Activated CD4-positive, alpha-beta T cell treated with anti-CD3 and anti-CD28 coated beads for 36 hours (primary cell): ENCODE measurements at regions of chr3 and their contacts with region 1.

Region 1: GRCh38 chr3:4850928-4851265 is 128.3 kb upstream of the BHLHE40 start:
- DNase-seq: peak; percentile 56
- ATAC-seq: peak; percentile 72
- H3K4me3 Mint-ChIP-seq: peak overlapping the region; percentile 39
- H3K27ac Mint-ChIP-seq: peak overlapping the region; percentile 98
- H3K4me1 Mint-ChIP-seq: peaks cover 84% of the 10 kb centered on the region
- H3K27me3 Mint-ChIP-seq: no peaks in the 10 kb centered on the region

Region 2: DNA sequence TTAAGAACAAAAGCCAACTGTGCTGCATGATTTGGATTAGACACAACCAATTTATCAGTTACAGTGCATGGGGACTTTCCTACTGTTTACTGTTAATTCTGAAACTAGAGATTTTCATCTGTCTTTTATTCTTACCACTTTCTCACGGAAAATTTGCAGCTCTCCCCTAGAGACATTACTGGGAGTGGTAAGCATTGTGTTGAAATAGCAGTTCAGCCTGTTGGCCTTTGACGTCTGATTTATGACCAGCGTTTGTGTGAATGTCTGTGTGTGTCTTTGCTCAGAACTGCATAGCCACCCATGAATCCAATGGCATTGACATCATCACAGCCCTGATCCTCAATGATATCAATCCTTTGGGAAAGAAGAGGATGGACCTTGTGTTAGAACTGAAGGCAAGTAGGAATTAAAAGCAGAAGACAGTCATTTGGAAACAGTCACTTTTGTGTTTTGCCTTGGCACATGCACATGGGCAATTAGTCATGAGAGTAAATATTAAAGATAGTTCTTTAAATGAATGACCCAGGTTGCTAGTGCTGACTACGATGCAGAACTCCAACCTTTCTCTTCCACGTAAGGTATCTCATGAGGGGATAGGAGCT is 73.8 kb before region 1 on chr3:
- CTCF ChIA-PET with region 1: interaction called, 3 read pairs
- POLR2A ChIA-PET with region 1: no interaction called
- intact Hi-C with region 1: loop called (anchors 1 kb)
- DNase-seq: peak; percentile 38
- ATAC-seq: peak; percentile 86
- H3K4me3 Mint-ChIP-seq: no peak overlapping the region
- H3K27ac Mint-ChIP-seq: peak overlapping the region; percentile 91
- H3K4me1 Mint-ChIP-seq: peaks cover 40% of the 10 kb centered on the region
- H3K27me3 Mint-ChIP-seq: no peaks in the 10 kb centered on the region

Region 3: GRCh38 chr3:4797201-4797705 is 53.6 kb before region 1 on chr3:
- CTCF ChIA-PET with region 1: no interaction called
- POLR2A ChIA-PET with region 1: no interaction called
- intact Hi-C with region 1: no loop called
- DNase-seq: no peak
- ATAC-seq: no peak
- H3K4me3 Mint-ChIP-seq: no peak overlapping the region
- H3K27ac Mint-ChIP-seq: no peak overlapping the region
- H3K4me1 Mint-ChIP-seq: no peaks in the 10 kb centered on the region
- H3K27me3 Mint-ChIP-seq: no peaks in the 10 kb centered on the region

Region 4: DNA sequence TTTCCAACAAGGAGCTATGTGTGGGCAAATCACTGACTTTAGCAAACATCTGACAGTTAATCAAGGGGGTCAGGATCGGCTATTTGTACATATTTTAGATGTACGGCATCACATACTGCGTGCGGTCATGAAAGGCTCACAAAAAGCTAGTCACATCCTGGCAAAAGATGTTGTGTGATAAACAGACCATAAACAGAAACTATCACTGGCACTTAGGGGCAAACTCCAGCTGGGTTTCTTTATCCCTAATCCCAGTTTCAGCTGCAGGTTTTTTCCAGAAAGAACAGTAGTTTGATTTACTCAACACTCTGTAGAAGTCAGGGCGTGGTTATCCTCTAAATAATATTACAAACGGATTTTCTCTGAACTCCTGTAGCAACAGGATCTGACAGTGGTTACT is 15.9 kb after region 1 on chr3:
- CTCF ChIA-PET with region 1: interaction called, 4 read pairs
- POLR2A ChIA-PET with region 1: no interaction called
- intact Hi-C with region 1: loop called in 1 of 2 experiments (anchors 1 kb)
- DNase-seq: no peak
- ATAC-seq: no peak
- H3K4me3 Mint-ChIP-seq: peak overlapping the region; percentile 80
- H3K27ac Mint-ChIP-seq: peak overlapping the region; percentile 92
- H3K4me1 Mint-ChIP-seq: peaks cover 40% of the 10 kb centered on the region
- H3K27me3 Mint-ChIP-seq: no peaks in the 10 kb centered on the region

Region 5: GRCh38 chr3:4898454-4899313 is 47.8 kb after region 1 on chr3:
- CTCF ChIA-PET with region 1: no interaction called
- POLR2A ChIA-PET with region 1: no interaction called
- intact Hi-C with region 1: loop called in 1 of 2 experiments (anchors 2 kb)
- DNase-seq: no peak
- ATAC-seq: peak; percentile 80
- H3K4me3 Mint-ChIP-seq: peak overlapping the region; percentile 15
- H3K27ac Mint-ChIP-seq: peak overlapping the region; percentile 34
- H3K4me1 Mint-ChIP-seq: peaks cover 47% of the 10 kb centered on the region
- H3K27me3 Mint-ChIP-seq: no peaks in the 10 kb centered on the region

Region 6: GRCh38 chr3:4935347-4935746 is 84.5 kb after region 1 on chr3:
- CTCF ChIA-PET with region 1: no interaction called
- POLR2A ChIA-PET with region 1: no interaction called
- intact Hi-C with region 1: no loop called
- DNase-seq: peak; percentile 49
- ATAC-seq: peak; percentile 81
- H3K4me3 Mint-ChIP-seq: no peak overlapping the region
- H3K27ac Mint-ChIP-seq: peak overlapping the region; percentile 44
- H3K4me1 Mint-ChIP-seq: peaks cover 15% of the 10 kb centered on the region
- H3K27me3 Mint-ChIP-seq: no peaks in the 10 kb centered on the region

Region 7: GRCh38 chr3:5122030-5122740 is 271.3 kb after region 1 on chr3 and contains the start of gene ARL8B:
- CTCF ChIA-PET with region 1: no interaction called
- POLR2A ChIA-PET with region 1: interaction called, 3 read pairs
- intact Hi-C with region 1: loop called (anchors 5 kb)
- DNase-seq: peak; percentile 96
- ATAC-seq: peak; percentile 84
- H3K4me3 Mint-ChIP-seq: peak within 1 kb of the TSS; percentile 83
- H3K27ac Mint-ChIP-seq: peak within 1 kb of the TSS; percentile 94
- H3K4me1 Mint-ChIP-seq: peaks cover 42% of the 10 kb centered on the region
- H3K27me3 Mint-ChIP-seq: no peaks in the 10 kb centered on the region
- total RNA-seq, gene ARL8B: 44.7 to 45.1 TPM

Region 8: DNA sequence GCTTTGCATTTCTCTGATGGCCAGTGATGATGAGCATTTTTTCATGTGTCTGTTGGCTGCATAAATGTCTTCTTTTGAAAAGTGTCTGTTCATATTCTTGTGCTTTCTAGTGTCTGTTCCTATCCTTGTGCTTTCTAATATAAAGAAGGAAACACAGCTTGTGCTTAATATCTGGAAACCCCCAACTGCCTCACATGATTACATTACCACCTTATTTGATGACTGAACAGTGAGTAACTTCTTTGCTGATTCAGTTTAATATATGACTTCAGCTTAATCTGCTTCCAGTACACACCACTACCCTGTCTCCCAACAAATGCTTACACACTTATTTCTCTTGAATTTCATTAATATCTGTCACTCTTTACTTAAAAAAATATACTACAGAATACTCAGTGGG is 1171.7 kb after region 1 on chr3:
- CTCF ChIA-PET with region 1: no interaction called
- POLR2A ChIA-PET with region 1: no interaction called
- intact Hi-C with region 1: no loop called
- DNase-seq: no peak
- ATAC-seq: no peak
- H3K4me3 Mint-ChIP-seq: no peak overlapping the region
- H3K27ac Mint-ChIP-seq: no peak overlapping the region
- H3K4me1 Mint-ChIP-seq: no peaks in the 10 kb centered on the region
- H3K27me3 Mint-ChIP-seq: no peaks in the 10 kb centered on the region